Naive thymus-derived CD4-positive, alpha-beta T cell (primary cell): ENCODE measurements at regions of chr6 and their contacts with region 1.

Region 1: GRCh38 chr6:111057074-111057752 is 30.1 kb upstream of the SLC16A10 start:
- DNase-seq: peak in 6 of 9 donors; percentile 22 to 54 (median 40)
- ATAC-seq: peak; percentile 76
- H3K4me3 ChIP-seq: no peak overlapping the region
- H3K4me3 Mint-ChIP-seq: peak overlapping the region in 1 of 10 donors; percentile 4
- H3K27ac ChIP-seq: no peak overlapping the region
- H3K27ac Mint-ChIP-seq: no peak overlapping the region
- H3K4me1 ChIP-seq: no peaks in the 10 kb centered on the region
- H3K4me1 Mint-ChIP-seq: peaks cover 0 to 6% (median 2%) of the 10 kb centered on the region in 7 donors
- H3K27me3 ChIP-seq: no peaks in the 10 kb centered on the region
- H3K27me3 Mint-ChIP-seq: peaks cover 0 to 6% (median 0%) of the 10 kb centered on the region in 5 donors

Region 2: DNA sequence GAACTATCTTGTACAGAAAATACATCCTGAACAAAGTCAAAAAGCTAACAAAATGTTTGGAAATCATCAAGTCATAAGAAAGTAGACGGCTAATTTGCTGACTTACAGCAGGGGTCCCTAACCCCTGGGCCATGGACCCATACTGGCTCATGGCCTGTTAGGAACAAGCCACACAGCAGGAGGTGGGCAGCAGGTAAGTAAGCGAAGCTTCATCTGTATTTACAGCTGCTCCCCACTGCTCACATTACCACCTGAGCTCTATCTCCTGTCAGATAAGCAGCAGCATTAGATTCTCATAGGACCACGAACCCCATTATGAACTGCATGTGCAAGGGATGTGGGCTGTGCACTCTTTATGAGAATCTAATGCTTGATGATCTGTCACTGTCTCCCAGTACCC is 357.4 kb before region 1 on chr6:
- CTCF ChIA-PET with region 1: interaction called, 11 read pairs
- POLR2A ChIA-PET with region 1: no interaction called
- intact Hi-C with region 1: no loop called
- DNase-seq: no peak
- ATAC-seq: no peak
- H3K4me3 ChIP-seq: no peak overlapping the region
- H3K4me3 Mint-ChIP-seq: no peak overlapping the region
- H3K27ac ChIP-seq: no peak overlapping the region
- H3K27ac Mint-ChIP-seq: peak overlapping the region in 1 of 9 donors; percentile 27
- H3K4me1 ChIP-seq: no peaks in the 10 kb centered on the region
- H3K4me1 Mint-ChIP-seq: peaks cover 0 to 9% (median 0%) of the 10 kb centered on the region in 7 donors
- H3K27me3 ChIP-seq: no peaks in the 10 kb centered on the region
- H3K27me3 Mint-ChIP-seq: no peaks in the 10 kb centered on the region

Region 3: DNA sequence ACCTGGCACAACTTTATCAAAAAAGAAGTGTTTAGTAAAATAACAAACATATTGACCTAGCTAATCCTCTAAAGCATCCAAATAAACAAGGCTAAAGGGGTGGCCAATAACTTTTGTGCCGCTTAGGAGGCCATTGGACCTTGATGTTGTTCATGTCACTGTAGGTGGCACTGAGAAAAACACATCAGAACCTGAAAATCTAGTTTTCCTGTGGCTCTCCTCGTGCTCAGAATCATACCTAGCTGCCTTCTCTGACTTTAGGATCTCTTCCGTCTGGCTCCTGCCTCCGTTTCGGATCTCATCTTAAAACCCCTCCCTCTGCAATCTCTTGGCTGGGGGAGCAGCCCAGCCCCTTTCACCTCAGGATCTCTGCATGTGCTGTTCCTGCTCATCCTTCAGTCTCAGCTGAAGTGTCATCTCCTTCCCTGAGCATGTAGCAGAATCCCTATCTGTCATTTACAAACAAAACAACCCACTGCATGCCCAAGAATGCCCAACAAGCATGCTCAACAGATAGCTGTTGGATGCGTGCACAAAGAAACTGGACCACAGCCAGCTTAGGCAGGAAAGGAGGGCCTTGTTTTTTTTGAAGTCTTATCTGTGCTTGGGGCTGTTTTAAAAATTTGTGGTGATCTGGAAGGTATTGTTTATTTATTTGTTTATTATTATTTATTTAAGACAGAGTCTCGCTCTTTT is 11.4 kb after region 1 on chr6:
- CTCF ChIA-PET with region 1: interaction called, 10 read pairs
- POLR2A ChIA-PET with region 1: no interaction called
- intact Hi-C with region 1: no loop called
- DNase-seq: no peak
- ATAC-seq: no peak
- H3K4me3 ChIP-seq: no peak overlapping the region
- H3K4me3 Mint-ChIP-seq: no peak overlapping the region
- H3K27ac ChIP-seq: no peak overlapping the region
- H3K27ac Mint-ChIP-seq: peak overlapping the region in 1 of 9 donors; percentile 1
- H3K4me1 ChIP-seq: no peaks in the 10 kb centered on the region
- H3K4me1 Mint-ChIP-seq: peaks cover 0 to 14% (median 7%) of the 10 kb centered on the region in 7 donors
- H3K27me3 ChIP-seq: no peaks in the 10 kb centered on the region
- H3K27me3 Mint-ChIP-seq: peaks cover 0 to 18% (median 10%) of the 10 kb centered on the region in 5 donors

Region 4: DNA sequence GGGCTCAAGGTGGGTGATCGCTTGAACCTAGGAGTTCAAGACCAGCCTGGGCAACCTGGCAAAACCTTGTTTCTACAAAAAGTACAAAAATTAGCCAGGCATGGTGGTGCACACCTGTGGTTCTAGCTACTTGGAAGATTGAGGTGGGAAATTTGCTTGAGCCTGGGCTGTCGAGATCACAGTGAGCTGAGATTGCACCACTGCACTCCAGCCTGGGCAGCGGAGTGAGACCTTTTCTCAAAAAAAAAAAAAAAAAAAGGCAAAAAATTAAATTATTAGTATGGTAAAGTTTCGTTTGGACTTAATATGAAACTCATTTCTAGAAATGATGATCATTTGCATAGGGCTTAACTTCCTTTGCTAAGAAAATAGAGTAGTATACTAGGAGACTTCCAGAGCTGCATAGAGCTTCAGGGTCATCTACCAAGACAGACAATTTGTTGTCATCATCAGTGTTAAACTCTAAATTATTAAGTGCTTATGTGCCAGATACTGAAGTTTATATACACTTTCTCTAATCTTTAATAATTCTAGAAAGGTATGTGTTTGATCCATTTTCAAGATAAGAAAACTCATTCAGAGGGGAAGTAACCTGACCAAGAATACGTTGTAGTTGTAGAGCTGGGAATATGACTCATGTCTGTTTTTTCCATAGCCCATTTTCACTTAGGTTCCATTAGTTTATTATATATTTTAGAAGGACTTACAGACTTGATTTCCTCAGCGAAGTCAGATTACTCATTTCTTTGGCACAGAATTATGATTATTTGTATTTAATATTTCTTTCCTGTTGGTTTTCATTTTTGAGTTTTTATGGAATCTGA is 114.6 kb after region 1 on chr6:
- CTCF ChIA-PET with region 1: interaction called, 5 read pairs
- POLR2A ChIA-PET with region 1: no interaction called
- intact Hi-C with region 1: loop called in 1 of 2 experiments (anchors 1 kb)
- DNase-seq: no peak
- ATAC-seq: no peak
- H3K4me3 ChIP-seq: no peak overlapping the region
- H3K4me3 Mint-ChIP-seq: no peak overlapping the region
- H3K27ac ChIP-seq: no peak overlapping the region
- H3K27ac Mint-ChIP-seq: no peak overlapping the region
- H3K4me1 ChIP-seq: peaks cover 0 to 20% of the 10 kb centered on the region in 2 donors
- H3K4me1 Mint-ChIP-seq: peaks cover 10 to 40% (median 26%) of the 10 kb centered on the region in 7 donors
- H3K27me3 ChIP-seq: no peaks in the 10 kb centered on the region
- H3K27me3 Mint-ChIP-seq: no peaks in the 10 kb centered on the region

Region 5: DNA sequence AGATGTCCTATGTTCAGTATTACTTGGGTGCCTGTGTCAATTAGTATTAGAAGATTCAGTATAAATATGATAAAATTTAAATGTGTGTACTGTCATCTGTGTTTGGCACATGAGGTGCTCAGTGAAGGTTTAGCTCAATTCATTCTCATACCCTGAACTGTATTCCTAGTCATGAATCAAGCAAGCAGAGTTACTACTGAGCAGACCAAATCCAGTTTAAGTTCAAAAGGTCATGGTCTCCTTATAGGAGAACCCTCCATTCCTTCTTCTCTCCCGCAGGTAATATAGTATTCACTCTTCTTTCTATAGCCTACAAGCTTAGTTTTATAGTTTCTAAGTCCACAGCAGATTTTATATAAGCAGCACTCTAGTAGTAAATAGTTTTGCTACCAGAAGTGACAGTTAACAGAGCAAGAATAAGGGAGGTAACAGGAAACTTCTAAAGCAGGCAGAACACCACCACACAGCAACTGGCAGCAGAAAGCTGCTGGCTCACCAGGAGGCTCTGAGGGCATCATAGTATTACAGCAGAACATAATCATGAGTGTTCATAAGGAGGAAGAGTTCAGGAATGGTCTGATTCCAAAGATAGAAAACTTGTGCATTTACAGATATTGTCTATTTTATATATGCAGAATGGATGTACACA is 163.3 kb after region 1 on chr6:
- CTCF ChIA-PET with region 1: interaction called, 13 read pairs
- POLR2A ChIA-PET with region 1: no interaction called
- intact Hi-C with region 1: no loop called
- DNase-seq: no peak
- ATAC-seq: no peak
- H3K4me3 ChIP-seq: no peak overlapping the region
- H3K4me3 Mint-ChIP-seq: no peak overlapping the region
- H3K27ac ChIP-seq: no peak overlapping the region
- H3K27ac Mint-ChIP-seq: no peak overlapping the region
- H3K4me1 ChIP-seq: no peaks in the 10 kb centered on the region
- H3K4me1 Mint-ChIP-seq: peaks cover 0 to 5% (median 0%) of the 10 kb centered on the region in 7 donors
- H3K27me3 ChIP-seq: no peaks in the 10 kb centered on the region
- H3K27me3 Mint-ChIP-seq: peaks cover 0 to 3% (median 0%) of the 10 kb centered on the region in 5 donors

Region 6: GRCh38 chr6:111642463-111643158 is 585.4 kb after region 1 on chr6:
- CTCF ChIA-PET with region 1: no interaction called
- POLR2A ChIA-PET with region 1: no interaction called
- intact Hi-C with region 1: loop called in 1 of 2 experiments (anchors 1 kb)
- DNase-seq: peak in 3 of 9 donors; percentile 11 to 25 (median 16)
- ATAC-seq: peak; percentile 65
- H3K4me3 ChIP-seq: no peak overlapping the region
- H3K4me3 Mint-ChIP-seq: no peak overlapping the region
- H3K27ac ChIP-seq: no peak overlapping the region
- H3K27ac Mint-ChIP-seq: peak overlapping the region in 1 of 9 donors; percentile 55
- H3K4me1 ChIP-seq: no peaks in the 10 kb centered on the region
- H3K4me1 Mint-ChIP-seq: peaks cover 0 to 6% (median 0%) of the 10 kb centered on the region in 7 donors
- H3K27me3 ChIP-seq: no peaks in the 10 kb centered on the region
- H3K27me3 Mint-ChIP-seq: no peaks in the 10 kb centered on the region

Region 7: GRCh38 chr6:111721753-111722154 is 664.5 kb after region 1 on chr6:
- CTCF ChIA-PET with region 1: no interaction called
- POLR2A ChIA-PET with region 1: no interaction called
- intact Hi-C with region 1: no loop called
- DNase-seq: peak in 2 of 9 donors; percentile 25 to 37
- ATAC-seq: peak; percentile 57
- H3K4me3 ChIP-seq: no peak overlapping the region
- H3K4me3 Mint-ChIP-seq: peak overlapping the region in 5 of 10 donors; percentile 38 to 75 (median 47)
- H3K27ac ChIP-seq: no peak overlapping the region
- H3K27ac Mint-ChIP-seq: peak overlapping the region in 8 of 9 donors; percentile 73 to 91 (median 88)
- H3K4me1 ChIP-seq: peaks cover 37 to 49% of the 10 kb centered on the region in 2 donors
- H3K4me1 Mint-ChIP-seq: peaks cover 41 to 90% (median 80%) of the 10 kb centered on the region in 7 donors
- H3K27me3 ChIP-seq: no peaks in the 10 kb centered on the region
- H3K27me3 Mint-ChIP-seq: no peaks in the 10 kb centered on the region